Caco-2 (cell line): ENCODE measurements at regions of chr9 and their contacts with region 1.

Region 1: GRCh38 chr9:113401027-113401792 is at the start of gene ALAD:
- DNase-seq: peak; percentile 99 to 100
- H3K4me3 ChIP-seq: peak within 1 kb of the TSS; percentile 72
- H3K4me3 Mint-ChIP-seq: peak within 1 kb of the TSS; percentile 88
- H3K27ac Mint-ChIP-seq: peak within 1 kb of the TSS; percentile 70
- H3K4me1 ChIP-seq: peaks cover 36% of the 10 kb centered on the region
- H3K4me1 Mint-ChIP-seq: peaks cover 19% of the 10 kb centered on the region
- H3K27me3 ChIP-seq: no peaks in the 10 kb centered on the region
- H3K27me3 Mint-ChIP-seq: no peaks in the 10 kb centered on the region
- CTCF ChIP-seq: peak; percentile 92 to 95
- total RNA-seq, gene ALAD: 43.6 and 48.8 TPM in 2 replicates

Region 2: GRCh38 chr9:113309204-113309813 is 91.9 kb before region 1 on chr9:
- CTCF ChIA-PET with region 1: no interaction called
- POLR2A ChIA-PET with region 1: no interaction called
- intact Hi-C with region 1: loop called (anchors 1 kb)
- DNase-seq: peak in 1 of 2 experiments; percentile 43
- H3K4me3 ChIP-seq: no peak overlapping the region
- H3K4me3 Mint-ChIP-seq: no peak overlapping the region
- H3K27ac Mint-ChIP-seq: no peak overlapping the region
- H3K4me1 ChIP-seq: no peaks in the 10 kb centered on the region
- H3K4me1 Mint-ChIP-seq: no peaks in the 10 kb centered on the region
- H3K27me3 ChIP-seq: no peaks in the 10 kb centered on the region
- H3K27me3 Mint-ChIP-seq: no peaks in the 10 kb centered on the region
- CTCF ChIP-seq: peak; percentile 66 to 84

Region 3: DNA sequence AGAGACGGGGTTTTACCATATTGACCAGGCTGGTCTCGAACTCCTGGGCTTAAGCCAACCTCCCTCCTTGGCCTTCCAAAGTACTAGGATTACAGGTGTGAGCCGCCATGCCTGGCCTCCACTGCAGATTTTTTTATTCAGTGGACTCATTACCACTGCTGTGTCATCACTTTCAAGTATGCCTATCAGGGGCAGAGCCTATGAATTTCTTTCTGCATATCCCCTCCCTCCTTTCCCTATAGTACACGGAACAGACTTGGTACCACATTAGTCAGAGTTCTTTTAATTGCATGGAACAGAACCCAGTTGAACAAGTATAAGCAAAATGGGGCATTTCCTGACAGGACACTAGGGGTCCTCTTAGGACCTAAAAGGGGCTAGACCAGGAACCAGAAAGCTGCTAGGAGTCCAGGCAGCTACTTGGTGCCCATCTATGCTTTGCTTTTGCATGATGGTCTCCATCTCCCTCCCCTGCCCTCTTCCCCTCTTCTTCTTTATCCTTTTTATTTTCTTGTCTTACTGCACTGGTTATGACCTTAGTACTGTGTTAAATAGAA is 46.1 kb before region 1 on chr9:
- CTCF ChIA-PET with region 1: interaction called, 11 read pairs
- POLR2A ChIA-PET with region 1: no interaction called
- intact Hi-C with region 1: loop called (anchors 1 kb)
- DNase-seq: peak in 1 of 2 experiments; percentile 52
- H3K4me3 ChIP-seq: no peak overlapping the region
- H3K4me3 Mint-ChIP-seq: no peak overlapping the region
- H3K27ac Mint-ChIP-seq: no peak overlapping the region
- H3K4me1 ChIP-seq: no peaks in the 10 kb centered on the region
- H3K4me1 Mint-ChIP-seq: peaks cover 4% of the 10 kb centered on the region
- H3K27me3 ChIP-seq: no peaks in the 10 kb centered on the region
- H3K27me3 Mint-ChIP-seq: no peaks in the 10 kb centered on the region
- CTCF ChIP-seq: peak; percentile 43 to 46

Region 4: GRCh38 chr9:113376634-113377567 is 24.3 kb before region 1 on chr9 and contains the start of gene HDHD3:
- CTCF ChIA-PET with region 1: interaction called, 6 read pairs
- POLR2A ChIA-PET with region 1: interaction called, 4 read pairs
- intact Hi-C with region 1: loop called (anchors 1 kb)
- DNase-seq: peak; percentile 82 to 87
- H3K4me3 ChIP-seq: peak within 1 kb of the TSS; percentile 96
- H3K4me3 Mint-ChIP-seq: peak within 1 kb of the TSS; percentile 77
- H3K27ac Mint-ChIP-seq: peak within 1 kb of the TSS; percentile 86
- H3K4me1 ChIP-seq: peaks cover 51% of the 10 kb centered on the region
- H3K4me1 Mint-ChIP-seq: peaks cover 26% of the 10 kb centered on the region
- H3K27me3 ChIP-seq: no peaks in the 10 kb centered on the region
- H3K27me3 Mint-ChIP-seq: no peaks in the 10 kb centered on the region
- CTCF ChIP-seq: no peak
- total RNA-seq, gene HDHD3: 60.9 and 64.9 TPM in 2 replicates

Region 5: GRCh38 chr9:113387560-113388230 is 13.5 kb before region 1 on chr9:
- CTCF ChIA-PET with region 1: interaction called, 5 read pairs
- POLR2A ChIA-PET with region 1: interaction called, 3 read pairs
- intact Hi-C with region 1: loop called (anchors 1 kb)
- DNase-seq: peak; percentile 68 to 78
- H3K4me3 ChIP-seq: no peak overlapping the region
- H3K4me3 Mint-ChIP-seq: peak overlapping the region; percentile 30
- H3K27ac Mint-ChIP-seq: peak overlapping the region; percentile 77
- H3K4me1 ChIP-seq: peaks cover 41% of the 10 kb centered on the region
- H3K4me1 Mint-ChIP-seq: peaks cover 40% of the 10 kb centered on the region
- H3K27me3 ChIP-seq: no peaks in the 10 kb centered on the region
- H3K27me3 Mint-ChIP-seq: no peaks in the 10 kb centered on the region
- CTCF ChIP-seq: no peak